A549 (cell line): ENCODE measurements at regions of chr5 and their contacts with region 1.

Region 1: DNA sequence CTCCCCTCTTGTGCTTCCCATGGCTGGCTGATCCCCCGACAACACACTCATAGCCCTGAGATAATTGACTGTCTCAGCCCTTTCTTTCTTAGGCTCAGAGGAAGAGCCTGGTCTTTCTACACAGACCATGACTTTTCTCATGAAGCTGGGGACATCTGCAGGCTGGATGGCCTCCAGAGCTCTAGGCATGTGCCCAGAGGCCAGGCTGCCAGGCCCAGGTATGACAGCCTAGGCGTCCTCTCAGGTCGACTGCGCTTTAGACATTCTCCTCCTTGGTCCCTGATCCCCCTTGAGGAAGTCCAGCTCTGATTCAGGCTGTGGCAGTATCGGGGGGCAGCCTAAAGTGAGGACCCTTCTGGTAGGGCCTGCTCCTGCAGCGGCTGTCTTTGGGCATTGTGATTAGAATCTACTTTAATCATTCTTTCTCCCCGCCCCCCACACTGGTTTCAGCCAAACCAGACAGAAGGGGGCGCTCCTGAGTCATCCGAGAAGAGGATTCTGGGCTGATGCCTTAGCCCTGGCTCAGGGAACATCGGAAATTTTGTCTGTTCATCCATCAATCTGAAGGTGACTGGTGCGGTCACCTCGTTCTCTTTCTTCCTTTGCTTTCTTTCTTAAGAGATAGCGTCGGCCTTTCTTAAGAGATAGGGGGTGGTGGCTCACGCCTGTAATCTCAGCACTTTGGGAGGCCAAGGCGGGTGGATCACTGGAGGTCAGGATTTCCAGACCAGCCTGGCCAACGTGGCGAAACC is 66.5 kb upstream of the HSPA9 start:
- DNase-seq: peak; percentile 62 to 65
- ATAC-seq: peak; percentile 74 to 91; a peak in 5 of 6 replicates
- H3K4me3 ChIP-seq: no peak overlapping the region
- H3K27ac ChIP-seq: no peak overlapping the region
- H3K4me1 ChIP-seq: no peaks in the 10 kb centered on the region
- CTCF ChIP-seq: peak; percentile 84
- EP300 ChIP-seq: no peak
- POLR2A ChIP-seq: no peak
- RAD21 ChIP-seq: peak; percentile 82 to 91

Region 2: GRCh38 chr5:138482638-138483037 is 159.1 kb before region 1 on chr5:
- CTCF ChIA-PET with region 1: no interaction called
- POLR2A ChIA-PET with region 1: no interaction called
- DNase-seq: no peak
- ATAC-seq: peak; percentile 54 to 68
- H3K4me3 ChIP-seq: no peak overlapping the region
- H3K27ac ChIP-seq: no peak overlapping the region
- H3K4me1 ChIP-seq: no peaks in the 10 kb centered on the region
- CTCF ChIP-seq: no peak
- EP300 ChIP-seq: no peak
- POLR2A ChIP-seq: no peak
- RAD21 ChIP-seq: no peak

Region 3: DNA sequence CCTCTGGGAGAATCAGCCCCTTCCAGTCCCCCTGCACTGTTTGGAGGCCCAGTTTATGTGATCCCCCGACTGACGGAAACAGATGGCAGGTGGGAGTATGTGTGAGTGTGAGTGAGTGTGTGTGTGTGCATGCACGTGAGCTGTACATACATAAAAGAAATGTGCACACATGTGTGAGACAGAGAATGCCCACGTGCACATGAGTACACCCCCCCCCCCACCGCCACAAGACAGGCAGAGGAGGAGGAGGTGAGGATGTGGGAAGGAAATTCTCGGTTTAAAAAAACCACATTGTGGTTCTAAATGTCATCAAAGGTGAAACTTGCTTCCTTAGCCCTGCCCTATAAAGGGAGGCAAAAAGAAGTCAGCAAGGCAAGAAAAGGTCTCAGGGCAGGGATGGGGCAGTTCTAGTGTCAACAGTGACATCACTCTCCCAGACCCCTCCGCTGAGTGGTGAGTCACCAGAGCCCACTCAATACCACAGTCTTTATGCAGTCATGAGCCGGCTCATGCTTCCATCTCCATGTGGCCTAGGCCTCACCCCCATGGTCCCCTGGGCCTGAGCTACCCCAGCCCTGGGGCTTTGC is 12.7 kb after region 1 on chr5:
- CTCF ChIA-PET with region 1: interaction called, 73 read pairs
- POLR2A ChIA-PET with region 1: no interaction called
- DNase-seq: no peak
- ATAC-seq: no peak
- H3K4me3 ChIP-seq: no peak overlapping the region
- H3K27ac ChIP-seq: no peak overlapping the region
- H3K4me1 ChIP-seq: no peaks in the 10 kb centered on the region
- CTCF ChIP-seq: no peak
- EP300 ChIP-seq: no peak
- POLR2A ChIP-seq: no peak
- RAD21 ChIP-seq: no peak